GM12878 (cell line): ENCODE measurements at regions of chr7 and their contacts with region 1.

Region 1: DNA sequence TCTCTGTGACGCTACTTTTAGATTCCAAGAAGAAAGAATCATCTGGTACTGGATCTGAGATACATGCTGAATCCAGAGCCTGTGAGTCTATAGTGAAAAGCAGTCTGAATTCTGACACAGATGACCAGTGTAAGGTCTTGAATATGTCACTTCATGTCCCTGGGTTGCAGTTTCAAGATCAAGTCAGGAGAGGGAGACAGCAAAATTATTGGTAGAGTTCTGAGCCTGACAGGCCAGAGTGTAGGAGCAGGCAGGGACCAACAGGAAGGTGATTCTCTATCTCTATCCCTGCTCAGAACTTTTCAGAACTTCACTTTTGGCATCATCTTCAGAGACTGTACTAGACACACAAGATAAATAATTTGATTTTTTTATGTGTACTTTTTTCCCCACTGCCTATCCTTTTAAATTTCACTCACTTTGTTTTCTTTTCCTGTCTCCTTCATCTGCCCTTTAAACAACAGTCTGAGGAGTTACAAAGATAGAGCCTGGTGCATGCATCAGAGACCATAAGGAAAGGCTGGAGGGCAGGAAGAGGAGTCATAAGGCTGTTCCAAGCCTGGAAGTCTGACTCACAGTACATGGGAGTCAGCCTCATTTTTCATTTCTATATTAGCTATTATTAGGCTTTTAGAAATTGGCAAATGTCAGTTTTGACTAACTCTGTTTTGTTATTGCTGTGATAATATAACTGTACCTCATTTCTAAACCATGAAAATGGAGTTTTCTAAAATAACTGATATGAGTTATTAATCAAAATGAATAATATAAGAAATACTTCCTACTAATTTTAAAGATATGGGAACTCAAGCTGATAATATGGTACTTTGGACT is 120.2 kb upstream of the TMEM229A start:
- DNase-seq: no peak
- ATAC-seq: peak; percentile 88
- H3K4me3 ChIP-seq: no peak overlapping the region
- H3K27ac ChIP-seq: no peak overlapping the region
- H3K4me1 ChIP-seq: no peaks in the 10 kb centered on the region
- H3K27me3 ChIP-seq: no peaks in the 10 kb centered on the region
- CTCF ChIP-seq: peak; percentile 34 to 44 (median 40); a peak in 4 of 6 replicates
- EP300 ChIP-seq: no peak
- POLR2A ChIP-seq: no peak
- RAD21 ChIP-seq: peak; percentile 49

Region 2: DNA sequence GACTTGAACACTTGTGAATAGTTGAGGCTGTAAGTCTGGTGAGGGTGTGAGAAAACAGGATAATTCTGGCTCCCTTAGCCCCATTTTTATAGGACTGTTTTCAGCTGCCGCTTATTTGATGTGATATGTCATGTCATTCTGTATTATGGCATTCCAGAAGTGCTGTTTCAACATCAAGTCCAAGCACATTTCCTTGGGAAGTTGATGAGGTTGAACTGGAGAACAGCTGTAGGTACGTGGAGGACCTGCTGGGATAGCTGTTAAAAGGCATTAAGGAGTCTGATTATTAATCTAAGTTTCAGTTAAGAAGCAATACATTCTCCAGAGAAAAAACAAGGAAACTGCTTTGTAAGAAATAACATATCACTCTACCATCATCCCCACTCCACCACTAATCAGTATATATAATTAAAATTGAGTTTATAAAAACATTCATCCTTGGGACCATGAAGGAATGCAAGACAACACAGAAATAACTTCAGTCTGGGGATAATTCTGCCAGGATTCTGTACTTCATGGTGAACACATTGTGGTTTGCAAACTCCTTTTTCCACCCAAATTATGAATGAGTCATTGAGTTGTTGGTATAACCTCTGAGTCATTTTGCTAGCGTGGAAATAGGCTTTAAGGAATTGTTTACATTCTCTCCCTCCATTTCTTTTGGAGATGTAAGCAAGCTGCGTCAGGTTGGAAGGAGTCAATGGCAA is 80.3 kb before region 1 on chr7:
- CTCF ChIA-PET with region 1: no interaction called
- POLR2A ChIA-PET with region 1: no interaction called
- RAD21 ChIA-PET with region 1: no interaction called
- SMC1A ChIA-PET with region 1: no interaction called
- in situ Hi-C with region 1: no loop called
- intact Hi-C with region 1: no loop called
- DNase-seq: no peak
- ATAC-seq: no peak
- H3K4me3 ChIP-seq: no peak overlapping the region
- H3K27ac ChIP-seq: no peak overlapping the region
- H3K4me1 ChIP-seq: no peaks in the 10 kb centered on the region
- H3K27me3 ChIP-seq: no peaks in the 10 kb centered on the region
- CTCF ChIP-seq: no peak
- EP300 ChIP-seq: no peak
- POLR2A ChIP-seq: no peak
- RAD21 ChIP-seq: no peak

Region 3: DNA sequence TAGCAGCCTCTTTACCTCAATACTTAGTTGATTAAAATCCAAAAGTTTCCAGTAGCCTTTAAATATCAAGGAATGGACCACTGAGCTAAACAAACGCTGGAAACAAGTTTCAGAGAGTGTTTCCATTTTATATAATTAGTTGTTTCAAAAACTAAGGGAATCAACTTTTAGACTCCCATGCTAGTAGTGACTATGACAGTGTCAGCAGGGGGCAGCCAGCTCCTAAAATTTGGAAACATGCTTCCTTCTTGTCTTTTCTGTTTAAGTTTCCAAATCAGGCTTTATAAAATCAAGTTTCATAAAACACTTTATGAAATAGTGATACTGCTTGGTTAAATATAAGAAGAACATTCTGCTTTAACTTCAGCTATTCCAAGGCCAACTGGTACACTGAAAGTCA is 18.0 kb after region 1 on chr7:
- CTCF ChIA-PET with region 1: interaction called, 11 read pairs
- POLR2A ChIA-PET with region 1: no interaction called
- RAD21 ChIA-PET with region 1: no interaction called
- SMC1A ChIA-PET with region 1: interaction called, 5 read pairs
- in situ Hi-C with region 1: no loop called
- intact Hi-C with region 1: no loop called
- DNase-seq: no peak
- ATAC-seq: peak; percentile 55; the same call in 1 of the 3 replicates
- H3K4me3 ChIP-seq: no peak overlapping the region
- H3K27ac ChIP-seq: no peak overlapping the region
- H3K4me1 ChIP-seq: no peaks in the 10 kb centered on the region
- H3K27me3 ChIP-seq: no peaks in the 10 kb centered on the region
- CTCF ChIP-seq: peak; percentile 4 to 42 (median 35); a peak in 4 of 6 replicates
- EP300 ChIP-seq: no peak
- POLR2A ChIP-seq: no peak
- RAD21 ChIP-seq: peak; percentile 75

Region 4: DNA sequence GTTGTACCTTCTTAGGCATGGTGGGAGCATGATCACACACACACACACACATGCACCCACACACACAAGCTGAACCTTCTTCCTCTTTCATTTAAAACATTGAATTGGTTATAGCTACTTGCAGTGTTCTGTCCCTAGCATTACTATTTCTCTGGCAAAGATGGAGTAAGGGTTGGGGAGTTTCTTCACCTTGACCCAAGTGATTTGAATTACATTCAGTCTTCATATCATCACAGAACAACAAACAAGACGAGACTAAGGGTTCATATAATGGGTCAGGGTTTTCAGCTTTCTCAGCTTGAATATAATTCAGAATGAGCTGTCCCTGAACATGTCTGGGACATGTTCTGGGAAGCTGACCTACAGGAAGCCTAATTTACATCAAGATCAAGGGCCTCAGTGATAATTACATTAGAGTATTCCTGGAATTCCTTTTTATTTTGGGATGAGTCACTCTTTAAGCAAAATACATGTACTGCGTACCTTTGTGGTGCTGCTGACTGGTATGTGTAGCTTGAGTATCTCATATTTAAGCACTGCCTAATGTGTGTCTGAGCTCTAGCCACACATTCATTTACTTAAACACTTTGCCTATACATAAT is 93.3 kb after region 1 on chr7:
- CTCF ChIA-PET with region 1: no interaction called
- POLR2A ChIA-PET with region 1: no interaction called
- RAD21 ChIA-PET with region 1: no interaction called
- SMC1A ChIA-PET with region 1: no interaction called
- in situ Hi-C with region 1: no loop called
- intact Hi-C with region 1: no loop called
- DNase-seq: no peak
- ATAC-seq: peak; percentile 45
- H3K4me3 ChIP-seq: no peak overlapping the region
- H3K27ac ChIP-seq: no peak overlapping the region
- H3K4me1 ChIP-seq: no peaks in the 10 kb centered on the region
- H3K27me3 ChIP-seq: no peaks in the 10 kb centered on the region
- CTCF ChIP-seq: no peak
- EP300 ChIP-seq: no peak
- POLR2A ChIP-seq: no peak
- RAD21 ChIP-seq: no peak